PC-9 (cell line): ENCODE measurements at regions of chr11 and their contacts with region 1.

Region 1: DNA sequence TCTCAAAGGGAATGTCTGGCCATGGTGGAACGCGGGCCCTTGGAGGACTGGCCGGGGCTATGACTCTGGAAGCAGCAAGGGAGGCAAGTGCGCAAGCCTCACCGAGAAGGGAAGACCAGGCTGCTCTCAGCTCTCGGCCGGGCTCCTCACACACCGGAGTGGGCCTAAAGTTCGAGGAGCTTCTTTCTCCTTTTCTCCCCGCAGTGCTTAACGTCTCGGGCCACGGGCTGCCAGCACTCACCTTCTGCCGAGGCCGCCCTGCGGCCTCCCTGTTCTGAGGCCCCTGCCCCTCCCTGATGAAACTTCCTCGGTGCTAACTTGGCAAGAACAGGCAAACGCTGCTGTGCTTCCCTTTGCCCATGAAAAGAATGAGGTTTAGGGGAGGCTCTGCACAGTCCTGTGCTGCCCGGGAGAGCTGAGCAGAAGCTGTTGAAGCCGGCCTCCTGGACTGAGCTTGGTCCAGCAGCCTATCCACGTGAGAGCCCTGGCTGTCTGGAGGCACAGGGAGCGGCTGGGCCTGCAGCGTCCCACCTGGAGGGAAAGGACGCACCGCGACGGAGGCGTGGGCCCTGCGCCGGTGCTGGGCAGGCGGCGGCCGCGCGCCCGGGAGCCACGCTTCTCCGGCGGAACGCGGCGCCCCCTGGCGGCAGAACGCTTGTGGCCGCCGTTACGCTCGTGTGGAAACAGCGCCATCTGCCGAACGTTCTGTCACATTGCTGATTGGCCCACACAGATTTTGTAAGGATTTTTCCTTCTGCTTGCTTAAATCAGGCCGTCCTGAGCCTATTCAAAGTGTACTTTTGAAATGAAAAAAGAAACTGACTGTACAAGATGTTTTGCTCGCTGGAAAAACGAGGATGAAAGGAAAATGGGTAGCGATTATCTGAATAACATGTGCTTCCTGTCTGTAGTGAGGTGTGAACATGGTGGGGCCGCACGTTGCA is 65.0 kb upstream of the TMEM45B start:
- DNase-seq: peak; percentile 67 to 84
- H3K4me3 ChIP-seq: peak overlapping the region; percentile 40; the same call in 1 of the 2 replicates
- H3K27ac ChIP-seq: no peak overlapping the region
- H3K4me1 ChIP-seq: 0 out of 2 replicates have a peak, but pooled peaks cover 5% of the 10 kb centered on the region
- H3K27me3 ChIP-seq: no peaks in the 10 kb centered on the region
- CTCF ChIP-seq: peak; percentile 93

Region 2: GRCh38 chr11:129364143-129364654 is 386.4 kb before region 1 on chr11:
- CTCF ChIA-PET with region 1: interaction called, 4 read pairs
- POLR2A ChIA-PET with region 1: no interaction called
- intact Hi-C with region 1: loop called (anchors 1 kb)
- DNase-seq: peak; percentile 85 to 87
- H3K4me3 ChIP-seq: no peak overlapping the region
- H3K27ac ChIP-seq: no peak overlapping the region
- H3K4me1 ChIP-seq: peaks cover 42% of the 10 kb centered on the region
- H3K27me3 ChIP-seq: no peaks in the 10 kb centered on the region
- CTCF ChIP-seq: peak; percentile 97

Region 3: GRCh38 chr11:129652828-129653227 is 97.8 kb before region 1 on chr11:
- CTCF ChIA-PET with region 1: no interaction called
- POLR2A ChIA-PET with region 1: no interaction called
- intact Hi-C with region 1: no loop called
- DNase-seq: peak in 1 of 2 experiments; percentile 82
- H3K4me3 ChIP-seq: no peak overlapping the region
- H3K27ac ChIP-seq: no peak overlapping the region
- H3K4me1 ChIP-seq: peaks cover 12% of the 10 kb centered on the region; the same call in 1 of the 2 replicates
- H3K27me3 ChIP-seq: no peaks in the 10 kb centered on the region
- CTCF ChIP-seq: no peak